Thyroid gland (tissue), 4 donors: ENCODE measurements at regions of chr1 and their contacts with region 1.

Region 1: DNA sequence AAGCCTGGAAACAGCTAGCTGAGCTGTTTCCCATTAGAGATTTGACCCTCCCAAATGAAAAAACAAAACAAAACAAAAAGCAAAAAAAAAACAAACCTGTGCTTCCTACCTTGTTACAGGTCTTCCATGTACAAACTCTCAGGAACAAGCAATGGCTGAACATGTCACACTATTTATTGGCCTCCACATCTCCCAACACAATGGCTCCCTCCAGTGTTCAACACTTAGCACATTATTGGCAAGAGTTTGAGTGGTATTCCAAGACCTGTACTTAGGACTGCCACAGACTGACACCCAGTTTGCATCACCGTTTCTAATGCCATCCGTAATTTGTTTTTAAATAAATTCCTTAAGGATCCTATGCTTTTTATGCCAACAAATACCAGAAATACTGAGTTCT is 195.0 kb upstream of the OLFM3 start:
- DNase-seq: peak; percentile 31 to 58
- H3K4me3 ChIP-seq: no peak overlapping the region
- H3K27ac ChIP-seq: no peak overlapping the region
- H3K4me1 ChIP-seq: no peaks in the 10 kb centered on the region
- H3K27me3 ChIP-seq: no peaks in the 10 kb centered on the region
- CTCF ChIP-seq: peak in 5 of 6 experiments; percentile 49 to 95 (median 77)
- POLR2A ChIP-seq: no peak

Region 2: GRCh38 chr1:101820071-101820470 is 371.7 kb before region 1 on chr1:
- intact Hi-C with region 1: loop called (anchors 10 kb)
- DNase-seq: peak in 1 of 2 donors; percentile 3
- H3K4me3 ChIP-seq: no peak overlapping the region
- H3K27ac ChIP-seq: no peak overlapping the region
- H3K4me1 ChIP-seq: peaks cover 0 to 8% of the 10 kb centered on the region in 2 donors
- H3K27me3 ChIP-seq: no peaks in the 10 kb centered on the region
- CTCF ChIP-seq: peak in 4 of 6 experiments; percentile 38 to 62 (median 57)
- POLR2A ChIP-seq: no peak

Region 3: DNA sequence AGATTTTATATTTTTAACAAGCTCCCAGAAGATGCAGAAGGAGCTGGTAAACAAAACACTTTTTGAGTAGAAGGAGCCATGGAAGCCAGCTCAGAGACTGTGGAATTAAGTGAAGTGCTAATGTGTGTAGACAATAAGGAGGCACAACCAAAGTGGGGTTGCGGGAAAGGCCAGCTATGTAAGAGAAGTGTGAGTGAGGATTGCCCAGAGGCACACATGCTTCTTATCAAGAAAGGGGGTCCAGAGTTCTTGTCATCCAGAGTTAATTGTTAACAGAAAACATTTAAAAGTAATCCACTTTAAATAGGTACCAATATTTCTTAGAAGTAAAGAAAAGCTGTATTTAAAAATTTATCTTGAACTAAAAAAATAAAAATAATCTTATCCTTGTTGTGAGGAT is 331.8 kb before region 1 on chr1:
- intact Hi-C with region 1: no loop called
- DNase-seq: no peak
- H3K4me3 ChIP-seq: no peak overlapping the region
- H3K27ac ChIP-seq: no peak overlapping the region
- H3K4me1 ChIP-seq: no peaks in the 10 kb centered on the region
- H3K27me3 ChIP-seq: no peaks in the 10 kb centered on the region
- CTCF ChIP-seq: no peak
- POLR2A ChIP-seq: no peak

Region 4: GRCh38 chr1:101905283-101905835 is 286.4 kb before region 1 on chr1:
- intact Hi-C with region 1: no loop called
- DNase-seq: no peak
- H3K4me3 ChIP-seq: no peak overlapping the region
- H3K27ac ChIP-seq: no peak overlapping the region
- H3K4me1 ChIP-seq: peaks cover 0 to 8% of the 10 kb centered on the region in 2 donors
- H3K27me3 ChIP-seq: no peaks in the 10 kb centered on the region
- CTCF ChIP-seq: no peak
- POLR2A ChIP-seq: no peak